ENCODE measurements at regions of chr10 and their contacts with region 1.

Region 1: GRCh38 chr10:69392481-69393000 is 24.2 kb downstream of the TACR2 start:
- DNase-seq: peak; percentile 89
- ATAC-seq: peak; percentile 98
- H3K4me3 Mint-ChIP-seq: no peak overlapping the region
- H3K27ac Mint-ChIP-seq: peak overlapping the region; percentile 74
- H3K4me1 Mint-ChIP-seq: peaks cover 18% of the 10 kb centered on the region
- H3K27me3 Mint-ChIP-seq: no peaks in the 10 kb centered on the region
- CTCF ChIP-seq: peak; percentile 86

Region 2: GRCh38 chr10:67943909-67944308 is 1448.6 kb before region 1 on chr10:
- CTCF ChIA-PET with region 1: no interaction called
- POLR2A ChIA-PET with region 1: no interaction called
- intact Hi-C with region 1: no loop called
- DNase-seq: no peak
- ATAC-seq: no peak
- H3K4me3 Mint-ChIP-seq: no peak overlapping the region
- H3K27ac Mint-ChIP-seq: no peak overlapping the region
- H3K4me1 Mint-ChIP-seq: peaks cover 2% of the 10 kb centered on the region
- H3K27me3 Mint-ChIP-seq: no peaks in the 10 kb centered on the region
- CTCF ChIP-seq: no peak

Region 3: DNA sequence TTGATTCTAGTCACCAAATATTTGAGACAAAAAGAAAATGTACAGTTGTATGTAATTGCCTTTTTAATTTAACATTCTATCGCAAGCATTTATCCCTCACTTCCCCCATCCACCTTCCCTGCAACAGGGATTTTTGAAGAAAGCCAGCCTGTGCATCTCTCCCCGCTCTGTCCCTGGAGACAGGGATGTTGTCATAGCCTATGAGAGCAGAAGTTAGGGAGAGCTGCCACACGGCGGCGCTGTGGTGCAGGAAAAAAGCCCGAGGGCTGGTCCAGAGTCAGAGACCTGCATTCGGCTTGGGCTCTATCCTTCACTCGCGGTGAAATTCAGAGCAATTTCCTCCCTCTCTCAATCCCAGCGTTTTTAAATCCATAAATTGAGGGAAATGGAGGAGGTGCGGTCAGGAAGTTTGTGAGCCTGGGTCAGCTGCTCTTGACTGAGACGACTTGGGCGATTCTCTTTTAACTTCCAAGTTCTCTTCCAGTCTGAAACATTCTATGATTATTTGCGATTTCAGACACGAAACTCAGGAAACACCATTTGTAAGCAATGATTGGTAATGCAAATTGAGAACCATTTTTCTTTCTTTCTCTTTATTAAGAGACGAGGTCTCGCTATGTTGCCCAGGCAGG is 154.9 kb before region 1 on chr10:
- CTCF ChIA-PET with region 1: interaction called, 96 read pairs
- POLR2A ChIA-PET with region 1: interaction called, 3 read pairs
- intact Hi-C with region 1: loop called (anchors 2 kb)
- DNase-seq: peak; percentile 93
- ATAC-seq: peak; percentile 99
- H3K4me3 Mint-ChIP-seq: no peak overlapping the region
- H3K27ac Mint-ChIP-seq: no peak overlapping the region
- H3K4me1 Mint-ChIP-seq: peaks cover 15% of the 10 kb centered on the region
- H3K27me3 Mint-ChIP-seq: no peaks in the 10 kb centered on the region
- CTCF ChIP-seq: peak; percentile 91